Panc1 (cell line): ENCODE measurements at regions of chr10 and their contacts with region 1.

Region 1: GRCh38 chr10:113732160-113732881 is 19.2 kb upstream of the PLEKHS1 start:
- DNase-seq: no peak
- ATAC-seq: no peak
- H3K4me3 ChIP-seq: no peak overlapping the region
- H3K27ac ChIP-seq: no peak overlapping the region
- H3K4me1 ChIP-seq: no peaks in the 10 kb centered on the region
- H3K27me3 ChIP-seq: no peaks in the 10 kb centered on the region
- CTCF ChIP-seq: no peak

Region 2: DNA sequence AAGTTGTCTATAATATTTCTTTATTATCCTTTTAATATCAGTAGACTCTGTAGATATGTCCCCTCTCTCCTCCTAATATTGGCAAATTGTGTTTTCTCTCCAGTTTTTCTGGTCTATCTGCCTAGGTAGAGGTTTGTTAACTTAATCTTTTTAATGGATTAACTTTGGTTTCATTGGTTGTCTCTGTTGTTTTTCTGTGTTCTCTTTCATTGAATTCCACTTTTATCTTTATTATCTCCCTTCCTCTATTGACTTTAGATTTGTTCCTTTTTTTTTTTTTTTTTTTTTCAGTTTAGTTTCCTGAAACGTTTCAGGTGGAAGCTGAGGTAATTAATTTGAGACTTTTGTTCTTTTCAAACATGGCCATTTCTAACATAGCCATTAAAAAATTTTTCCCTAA is 29.8 kb after region 1 on chr10:
- CTCF ChIA-PET with region 1: interaction called, 11 read pairs
- POLR2A ChIA-PET with region 1: no interaction called
- in situ Hi-C with region 1: no loop called
- intact Hi-C with region 1: no loop called
- DNase-seq: no peak
- ATAC-seq: no peak
- H3K4me3 ChIP-seq: no peak overlapping the region
- H3K27ac ChIP-seq: no peak overlapping the region
- H3K4me1 ChIP-seq: no peaks in the 10 kb centered on the region
- H3K27me3 ChIP-seq: peaks cover 18% of the 10 kb centered on the region
- CTCF ChIP-seq: no peak